GM12878 (cell line): ENCODE measurements at regions of chr3 and their contacts with region 1.

Region 1: GRCh38 chr3:98770261-98771039 is 7.3 kb downstream of the ST3GAL6 start:
- DNase-seq: peak; percentile 53
- ATAC-seq: peak; percentile 95
- H3K4me3 ChIP-seq: 0 out of 2 replicates have a peak overlapping the region, but pooled peaks have one; percentile 5
- H3K27ac ChIP-seq: peak overlapping the region; percentile 62
- H3K4me1 ChIP-seq: peaks cover 10% of the 10 kb centered on the region
- H3K27me3 ChIP-seq: no peaks in the 10 kb centered on the region
- CTCF ChIP-seq: no peak
- EP300 ChIP-seq: peak; percentile 68 to 79; a peak in 3 of 4 replicates
- POLR2A ChIP-seq: no peak
- RAD21 ChIP-seq: no peak

Region 2: GRCh38 chr3:98750276-98750919 is 20.1 kb before region 1 on chr3:
- CTCF ChIA-PET with region 1: interaction called, 3 read pairs
- POLR2A ChIA-PET with region 1: interaction called, 5 read pairs
- RAD21 ChIA-PET with region 1: interaction called, 7 read pairs
- SMC1A ChIA-PET with region 1: interaction called, 34 read pairs
- in situ Hi-C with region 1: no loop called
- intact Hi-C with region 1: no loop called
- DNase-seq: no peak
- ATAC-seq: peak; percentile 39
- H3K4me3 ChIP-seq: no peak overlapping the region
- H3K27ac ChIP-seq: no peak overlapping the region
- H3K4me1 ChIP-seq: peaks cover 3% of the 10 kb centered on the region; the same call in 1 of the 2 replicates
- H3K27me3 ChIP-seq: no peaks in the 10 kb centered on the region
- CTCF ChIP-seq: no peak
- EP300 ChIP-seq: no peak
- POLR2A ChIP-seq: no peak
- RAD21 ChIP-seq: no peak

Region 3: GRCh38 chr3:98824256-98824655 is 53.8 kb after region 1 on chr3:
- CTCF ChIA-PET with region 1: no interaction called
- POLR2A ChIA-PET with region 1: no interaction called
- RAD21 ChIA-PET with region 1: no interaction called
- SMC1A ChIA-PET with region 1: no interaction called
- in situ Hi-C with region 1: no loop called
- intact Hi-C with region 1: no loop called
- DNase-seq: no peak
- ATAC-seq: peak; percentile 55; the same call in 2 of the 3 replicates
- H3K4me3 ChIP-seq: no peak overlapping the region
- H3K27ac ChIP-seq: no peak overlapping the region
- H3K4me1 ChIP-seq: no peaks in the 10 kb centered on the region
- H3K27me3 ChIP-seq: no peaks in the 10 kb centered on the region
- CTCF ChIP-seq: peak; percentile 6 to 35 (median 30); a peak in 4 of 6 replicates
- EP300 ChIP-seq: no peak
- POLR2A ChIP-seq: no peak
- RAD21 ChIP-seq: peak; percentile 60

Region 4: GRCh38 chr3:99012051-99012450 is 241.6 kb after region 1 on chr3:
- CTCF ChIA-PET with region 1: no interaction called
- POLR2A ChIA-PET with region 1: no interaction called
- RAD21 ChIA-PET with region 1: no interaction called
- SMC1A ChIA-PET with region 1: no interaction called
- in situ Hi-C with region 1: no loop called
- intact Hi-C with region 1: no loop called
- DNase-seq: peak; percentile 69
- ATAC-seq: peak; percentile 99
- H3K4me3 ChIP-seq: no peak overlapping the region
- H3K27ac ChIP-seq: no peak overlapping the region; the same call in 1 of the 2 replicates
- H3K4me1 ChIP-seq: peaks cover 8% of the 10 kb centered on the region; the same call in 1 of the 2 replicates
- H3K27me3 ChIP-seq: no peaks in the 10 kb centered on the region
- CTCF ChIP-seq: no peak
- EP300 ChIP-seq: peak; percentile 23 to 52; a peak in 1 of 4 replicates
- POLR2A ChIP-seq: no peak
- RAD21 ChIP-seq: no peak